Activated CD4-positive, alpha-beta T cell treated with anti-CD3 and anti-CD28 coated beads for 36 hours (primary cell): ENCODE measurements at regions of chr15 and their contacts with region 1.

Region 1: DNA sequence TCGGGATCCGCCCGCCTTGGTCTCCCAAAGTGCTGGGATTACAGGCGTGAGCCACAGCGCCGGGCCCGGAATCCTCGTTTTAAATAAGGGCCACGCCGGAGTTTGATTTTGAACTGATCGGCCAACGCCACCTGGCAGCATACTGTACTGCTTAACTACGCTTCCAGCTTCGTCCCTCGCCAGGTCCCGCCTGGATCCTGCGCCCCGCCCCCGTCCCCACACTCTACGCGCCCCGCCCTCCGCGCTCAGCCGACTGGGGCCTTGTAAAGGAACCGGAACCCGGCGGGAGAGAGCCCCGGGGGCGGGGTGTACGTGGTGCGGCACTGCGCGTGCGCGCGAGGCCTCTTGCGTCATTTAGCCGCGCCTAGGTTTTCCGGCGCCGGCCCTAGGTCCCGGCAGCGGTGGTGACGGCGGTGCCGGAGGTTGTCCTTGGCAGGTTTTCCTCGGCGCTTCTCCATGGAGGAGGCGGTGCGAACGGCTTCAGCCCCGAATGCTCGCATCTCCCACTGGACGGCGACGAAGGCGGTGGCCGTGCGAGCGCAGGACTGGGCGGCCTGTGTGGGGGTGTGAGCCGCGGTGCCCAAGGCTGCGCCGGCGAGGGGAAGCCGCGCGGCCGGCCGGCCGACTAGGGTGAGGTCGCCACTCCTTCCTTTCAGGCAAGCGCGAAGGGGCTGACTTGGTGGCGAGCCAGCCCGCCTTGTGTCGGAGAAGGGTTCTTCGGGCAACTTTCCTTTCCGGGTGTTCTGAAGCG is at the start of gene NIPA2:
- DNase-seq: peak; percentile 99
- ATAC-seq: peak; percentile 96
- H3K4me3 Mint-ChIP-seq: peak within 1 kb of the TSS; percentile 96
- H3K27ac Mint-ChIP-seq: peak within 1 kb of the TSS; percentile 98
- H3K4me1 Mint-ChIP-seq: peaks cover 29% of the 10 kb centered on the region
- H3K27me3 Mint-ChIP-seq: no peaks in the 10 kb centered on the region
- total RNA-seq, gene NIPA2: 42.6 to 61.4 TPM

Region 2: GRCh38 chr15:22786868-22787698 is 51.4 kb before region 1 on chr15:
- CTCF ChIA-PET with region 1: no interaction called
- POLR2A ChIA-PET with region 1: no interaction called
- intact Hi-C with region 1: loop called (anchors 1 to 5 kb)
- DNase-seq: peak; percentile 43
- ATAC-seq: peak; percentile 20
- H3K4me3 Mint-ChIP-seq: peak overlapping the region; percentile 83
- H3K27ac Mint-ChIP-seq: peak overlapping the region; percentile 80
- H3K4me1 Mint-ChIP-seq: peaks cover 35% of the 10 kb centered on the region
- H3K27me3 Mint-ChIP-seq: no peaks in the 10 kb centered on the region

Region 3: GRCh38 chr15:22795206-22796063 is 43.0 kb before region 1 on chr15:
- CTCF ChIA-PET with region 1: interaction called, 3 read pairs
- POLR2A ChIA-PET with region 1: no interaction called
- intact Hi-C with region 1: loop called in 1 of 2 experiments (anchors 1 kb)
- DNase-seq: no peak
- ATAC-seq: no peak
- H3K4me3 Mint-ChIP-seq: no peak overlapping the region
- H3K27ac Mint-ChIP-seq: no peak overlapping the region
- H3K4me1 Mint-ChIP-seq: peaks cover 56% of the 10 kb centered on the region
- H3K27me3 Mint-ChIP-seq: no peaks in the 10 kb centered on the region